ENCODE measurements at regions of chr14 and their contacts with region 1.

Region 1: GRCh38 chr14:20855652-20856291 is 35.4 kb upstream of the RNASE3 start:
- DNase-seq: peak; percentile 22
- ATAC-seq: peak; percentile 99
- H3K4me3 Mint-ChIP-seq: no peak overlapping the region
- H3K27ac Mint-ChIP-seq: no peak overlapping the region
- H3K4me1 Mint-ChIP-seq: peaks cover 4% of the 10 kb centered on the region
- H3K27me3 Mint-ChIP-seq: peaks cover 22% of the 10 kb centered on the region
- CTCF ChIP-seq: peak; percentile 56

Region 2: GRCh38 chr14:20652996-20653975 is 202.5 kb before region 1 on chr14:
- CTCF ChIA-PET with region 1: interaction called, 3 read pairs
- POLR2A ChIA-PET with region 1: no interaction called
- intact Hi-C with region 1: loop called (anchors 5 kb)
- DNase-seq: no peak
- ATAC-seq: no peak
- H3K4me3 Mint-ChIP-seq: peak overlapping the region; percentile 58
- H3K27ac Mint-ChIP-seq: no peak overlapping the region
- H3K4me1 Mint-ChIP-seq: peaks cover 14% of the 10 kb centered on the region
- H3K27me3 Mint-ChIP-seq: peaks cover 50% of the 10 kb centered on the region
- CTCF ChIP-seq: no peak

Region 3: DNA sequence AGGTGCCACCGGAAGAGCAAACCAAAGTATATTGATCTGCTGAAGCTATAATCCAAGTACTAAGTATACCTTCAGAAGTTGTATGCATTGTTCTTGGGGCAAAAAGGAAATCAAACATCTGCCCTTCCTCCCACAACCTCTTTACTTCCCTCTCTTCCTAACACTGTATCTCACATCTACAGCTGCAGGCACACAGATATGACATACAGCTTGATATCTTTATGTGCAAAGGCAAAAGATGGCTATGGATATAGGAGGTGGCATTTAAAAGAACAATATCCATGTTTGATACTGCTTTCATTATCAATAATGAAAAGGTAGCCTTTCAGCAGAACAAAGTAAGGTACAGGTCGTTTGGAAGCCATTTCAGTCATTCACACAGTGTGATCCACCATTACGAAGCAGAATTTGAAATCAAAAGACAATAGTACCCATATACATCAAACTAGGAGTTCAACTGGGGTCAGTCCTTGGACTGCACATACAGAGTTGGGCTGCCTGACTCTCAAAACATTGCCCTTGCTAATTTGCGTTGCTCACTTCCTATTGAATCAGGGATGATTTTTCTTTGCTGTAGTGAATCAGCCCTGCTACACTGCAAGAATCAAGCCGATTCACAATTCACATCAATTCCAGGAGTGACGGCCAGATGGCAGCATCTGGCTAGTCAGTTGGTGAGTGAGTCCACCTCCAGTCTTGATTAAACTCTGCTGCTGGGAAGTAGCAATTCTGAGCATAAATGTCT is 158.3 kb before region 1 on chr14:
- CTCF ChIA-PET with region 1: interaction called, 76 read pairs
- POLR2A ChIA-PET with region 1: no interaction called
- intact Hi-C with region 1: loop called (anchors 1 kb)
- DNase-seq: peak; percentile 56
- ATAC-seq: peak; percentile 95
- H3K4me3 Mint-ChIP-seq: no peak overlapping the region
- H3K27ac Mint-ChIP-seq: no peak overlapping the region
- H3K4me1 Mint-ChIP-seq: peaks cover 4% of the 10 kb centered on the region
- H3K27me3 Mint-ChIP-seq: no peaks in the 10 kb centered on the region
- CTCF ChIP-seq: peak; percentile 94

Region 4: GRCh38 chr14:20782280-20782890 is 73.4 kb before region 1 on chr14:
- CTCF ChIA-PET with region 1: interaction called, 8 read pairs
- POLR2A ChIA-PET with region 1: no interaction called
- intact Hi-C with region 1: loop called (anchors 1 kb)
- DNase-seq: no peak
- ATAC-seq: peak; percentile 59
- H3K4me3 Mint-ChIP-seq: peak overlapping the region; percentile 86
- H3K27ac Mint-ChIP-seq: peak overlapping the region; percentile 98
- H3K4me1 Mint-ChIP-seq: peaks cover 68% of the 10 kb centered on the region
- H3K27me3 Mint-ChIP-seq: no peaks in the 10 kb centered on the region
- CTCF ChIP-seq: no peak

Region 5: GRCh38 chr14:20873370-20874177 is 17.8 kb after region 1 on chr14:
- CTCF ChIA-PET with region 1: interaction called, 29 read pairs
- POLR2A ChIA-PET with region 1: no interaction called
- intact Hi-C with region 1: loop called (anchors 1 kb)
- DNase-seq: peak; percentile 66
- ATAC-seq: peak; percentile 71
- H3K4me3 Mint-ChIP-seq: no peak overlapping the region
- H3K27ac Mint-ChIP-seq: no peak overlapping the region
- H3K4me1 Mint-ChIP-seq: peaks cover 8% of the 10 kb centered on the region
- H3K27me3 Mint-ChIP-seq: peaks cover 26% of the 10 kb centered on the region
- CTCF ChIP-seq: peak; percentile 87

Region 6: GRCh38 chr14:21121106-21121505 is 265.3 kb after region 1 on chr14:
- CTCF ChIA-PET with region 1: no interaction called
- POLR2A ChIA-PET with region 1: no interaction called
- intact Hi-C with region 1: no loop called
- DNase-seq: no peak
- ATAC-seq: no peak
- H3K4me3 Mint-ChIP-seq: no peak overlapping the region
- H3K27ac Mint-ChIP-seq: no peak overlapping the region
- H3K4me1 Mint-ChIP-seq: no peaks in the 10 kb centered on the region
- H3K27me3 Mint-ChIP-seq: peaks cover 32% of the 10 kb centered on the region
- CTCF ChIP-seq: no peak